ENCODE measurements at regions of chr21 and their contacts with region 1.

Region 1: GRCh38 chr21:15034126-15034853 is 30.5 kb downstream of the NRIP1 start:
- DNase-seq: no peak
- ATAC-seq: no peak
- H3K4me3 ChIP-seq: no peak overlapping the region
- H3K4me3 Mint-ChIP-seq: no peak overlapping the region
- H3K27ac ChIP-seq: no peak overlapping the region
- H3K27ac Mint-ChIP-seq: peak overlapping the region in 1 of 9 donors; percentile 82
- H3K4me1 ChIP-seq: peaks cover 0 to 4% of the 10 kb centered on the region in 2 donors
- H3K4me1 Mint-ChIP-seq: peaks cover 3 to 71% (median 41%) of the 10 kb centered on the region in 7 donors
- H3K27me3 ChIP-seq: no peaks in the 10 kb centered on the region
- H3K27me3 Mint-ChIP-seq: no peaks in the 10 kb centered on the region

Region 2: GRCh38 chr21:14602382-14602958 is 431.8 kb before region 1 on chr21:
- CTCF ChIA-PET with region 1: no interaction called
- POLR2A ChIA-PET with region 1: no interaction called
- intact Hi-C with region 1: no loop called
- DNase-seq: no peak
- ATAC-seq: no peak
- H3K4me3 ChIP-seq: peak overlapping the region; percentile 46
- H3K4me3 Mint-ChIP-seq: peak overlapping the region; percentile 11 to 82 (median 62)
- H3K27ac ChIP-seq: no peak overlapping the region
- H3K27ac Mint-ChIP-seq: peak overlapping the region in 7 of 9 donors; percentile 3 to 80 (median 58)
- H3K4me1 ChIP-seq: peaks cover 10 to 11% of the 10 kb centered on the region in 2 donors
- H3K4me1 Mint-ChIP-seq: peaks cover 14 to 48% (median 27%) of the 10 kb centered on the region in 7 donors
- H3K27me3 ChIP-seq: no peaks in the 10 kb centered on the region
- H3K27me3 Mint-ChIP-seq: no peaks in the 10 kb centered on the region

Region 3: DNA sequence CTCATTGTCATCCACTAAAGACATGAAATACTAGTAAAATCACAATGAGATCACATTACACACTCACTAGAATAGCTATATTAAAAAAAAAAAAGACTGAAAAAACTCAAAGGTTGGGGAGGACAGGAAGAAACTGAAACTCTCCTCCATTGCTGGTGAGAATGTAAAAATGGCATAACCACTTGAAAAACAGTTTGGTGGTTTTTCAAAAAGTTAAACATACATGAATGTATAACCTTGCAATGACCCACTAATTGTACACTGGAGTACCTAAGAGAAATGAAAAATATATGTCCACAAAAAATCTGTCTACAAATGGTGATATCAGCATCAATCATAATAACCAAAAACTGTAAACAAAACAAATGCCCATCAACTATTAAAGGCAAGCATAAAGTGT is 13.5 kb before region 1 on chr21:
- CTCF ChIA-PET with region 1: interaction called, 3 read pairs
- POLR2A ChIA-PET with region 1: no interaction called
- intact Hi-C with region 1: loop called in 1 of 2 experiments (anchors 2 kb)
- DNase-seq: no peak
- ATAC-seq: no peak
- H3K4me3 ChIP-seq: no peak overlapping the region
- H3K4me3 Mint-ChIP-seq: peak overlapping the region in 2 of 10 donors; percentile 12 to 23
- H3K27ac ChIP-seq: no peak overlapping the region
- H3K27ac Mint-ChIP-seq: peak overlapping the region in 1 of 9 donors; percentile 7
- H3K4me1 ChIP-seq: peaks cover 0 to 3% of the 10 kb centered on the region in 2 donors
- H3K4me1 Mint-ChIP-seq: peaks cover 11 to 56% (median 49%) of the 10 kb centered on the region in 7 donors
- H3K27me3 ChIP-seq: no peaks in the 10 kb centered on the region
- H3K27me3 Mint-ChIP-seq: no peaks in the 10 kb centered on the region

Region 4: DNA sequence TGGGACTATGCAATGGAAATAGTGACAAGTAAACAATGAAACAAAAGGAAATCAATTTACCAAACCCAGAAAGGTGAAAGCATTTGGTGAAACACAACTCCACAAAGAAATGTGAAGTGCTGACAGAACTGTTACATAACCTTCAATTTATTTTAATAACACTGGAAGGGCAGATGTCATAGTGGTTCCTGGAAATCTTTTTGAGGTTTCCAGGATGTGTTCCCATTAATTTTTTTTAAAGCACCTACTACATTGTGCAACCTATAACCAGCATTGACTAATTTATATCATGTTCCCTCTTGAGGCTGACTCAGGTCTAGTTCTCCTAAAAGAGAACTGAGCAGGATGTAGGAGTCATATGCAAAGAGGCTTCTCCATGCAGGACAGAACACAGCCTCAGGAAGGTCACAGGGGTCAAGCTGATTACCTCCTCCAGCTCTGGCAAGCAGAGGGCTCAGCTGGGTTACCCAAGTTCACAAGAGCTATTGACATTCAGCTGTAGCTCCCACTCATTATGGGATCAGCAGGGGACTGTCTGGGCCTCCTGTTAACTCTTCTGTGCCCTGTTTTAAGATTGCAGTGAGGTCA is 187.6 kb after region 1 on chr21:
- CTCF ChIA-PET with region 1: no interaction called
- POLR2A ChIA-PET with region 1: no interaction called
- intact Hi-C with region 1: no loop called
- DNase-seq: no peak
- ATAC-seq: peak; percentile 87
- H3K4me3 ChIP-seq: no peak overlapping the region
- H3K4me3 Mint-ChIP-seq: no peak overlapping the region
- H3K27ac ChIP-seq: no peak overlapping the region
- H3K27ac Mint-ChIP-seq: no peak overlapping the region
- H3K4me1 ChIP-seq: no peaks in the 10 kb centered on the region
- H3K4me1 Mint-ChIP-seq: peaks cover 0 to 7% (median 0%) of the 10 kb centered on the region in 7 donors
- H3K27me3 ChIP-seq: no peaks in the 10 kb centered on the region
- H3K27me3 Mint-ChIP-seq: peaks cover 0 to 4% (median 0%) of the 10 kb centered on the region in 5 donors

Measured in naive thymus-derived CD4-positive, alpha-beta T cell (primary cell).